OCI-LY7 (cell line): ENCODE measurements at regions of chr5 and their contacts with region 1.

Region 1: DNA sequence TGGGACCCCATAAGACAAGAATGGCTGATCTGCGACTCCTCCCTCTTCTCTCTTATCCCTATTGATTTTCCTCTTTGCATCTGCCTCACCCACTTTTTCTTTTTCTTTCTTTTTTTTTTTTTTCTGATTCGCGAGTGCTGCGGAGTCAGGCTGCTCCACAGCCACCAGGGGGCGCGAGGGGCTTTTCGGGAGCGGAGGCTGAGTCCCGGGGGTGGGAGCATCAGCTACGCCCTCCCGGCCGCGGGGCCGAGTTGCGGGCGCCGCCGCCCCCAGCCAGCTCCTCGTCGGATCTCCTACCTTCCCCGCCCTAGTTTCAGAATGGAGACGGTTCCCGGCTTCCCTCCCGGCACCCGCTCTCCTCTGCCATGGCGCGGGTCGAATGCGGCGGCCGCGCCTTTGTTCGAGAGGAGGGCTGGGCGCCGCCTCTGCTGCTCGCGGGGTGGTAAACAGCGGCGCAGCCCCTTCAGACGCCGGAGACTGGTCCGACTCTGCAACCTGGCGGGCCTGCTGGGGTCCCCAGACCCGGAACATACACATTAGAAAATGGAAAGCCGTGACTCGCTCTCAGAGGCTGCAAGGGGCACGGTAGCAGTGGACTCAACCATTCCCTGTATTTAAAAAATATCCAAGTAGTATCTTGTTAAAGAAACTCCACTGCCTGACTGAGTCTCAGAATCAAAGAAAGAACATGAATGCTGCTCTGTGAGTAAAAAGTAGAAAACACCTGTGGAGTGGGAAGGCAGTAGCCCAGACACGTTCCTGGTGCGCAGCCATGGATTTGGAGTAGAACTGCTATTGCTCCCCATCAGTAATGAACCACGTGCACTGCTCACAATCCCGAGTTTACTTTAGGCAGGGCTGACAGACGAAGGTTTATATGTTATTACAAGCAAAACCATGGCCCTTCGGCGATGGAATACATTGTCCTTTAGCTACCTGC is 55.7 kb downstream of the DPYSL3 start:
- DNase-seq: peak; percentile 77
- H3K4me3 ChIP-seq: peak overlapping the region; percentile 64
- H3K27ac ChIP-seq: no peak overlapping the region
- H3K4me1 ChIP-seq: peaks cover 16% of the 10 kb centered on the region
- CTCF ChIP-seq: peak; percentile 87

Region 2: GRCh38 chr5:147578228-147579024 is 124.3 kb after region 1 on chr5:
- CTCF ChIA-PET with region 1: no interaction called
- POLR2A ChIA-PET with region 1: no interaction called
- intact Hi-C with region 1: loop called (anchors 2 kb)
- DNase-seq: peak; percentile 19
- H3K4me3 ChIP-seq: no peak overlapping the region
- H3K27ac ChIP-seq: no peak overlapping the region
- H3K4me1 ChIP-seq: no peaks in the 10 kb centered on the region
- CTCF ChIP-seq: peak; percentile 71